H1 (cell line): ENCODE measurements at regions of chr7 and their contacts with region 1.

Region 1: DNA sequence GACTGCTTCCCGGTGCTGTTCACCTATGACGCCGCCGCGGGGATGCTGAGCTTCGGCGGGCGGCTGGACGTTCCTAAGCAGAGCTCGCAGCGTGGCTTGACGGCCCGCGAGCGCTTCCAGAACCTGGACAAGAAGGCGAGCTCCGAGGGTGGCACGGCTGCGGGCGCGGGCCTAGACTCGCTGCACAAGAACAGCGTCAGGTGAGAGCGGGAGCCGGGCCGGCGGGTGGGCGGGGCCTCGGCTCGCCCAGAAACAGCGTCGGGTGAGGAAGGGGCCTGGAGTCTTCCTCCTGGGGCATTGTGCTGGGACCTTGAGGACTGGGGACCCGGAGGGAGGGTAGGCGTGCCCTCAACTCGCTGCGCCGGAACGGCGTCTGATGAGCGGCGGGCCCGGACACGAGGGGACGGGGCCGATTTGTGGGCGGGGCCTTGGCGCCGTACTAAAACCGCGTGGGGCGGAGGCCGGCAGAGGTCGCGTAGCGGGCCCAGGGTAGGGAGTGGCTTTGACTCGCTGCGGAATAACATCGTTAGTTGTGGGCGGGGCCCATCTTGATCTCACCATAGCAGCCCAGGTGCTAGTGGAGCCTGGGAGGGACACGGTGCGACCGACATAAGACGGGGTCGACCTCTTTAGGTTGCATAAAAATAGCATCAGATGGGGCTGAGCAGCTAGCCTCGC is 15.6 kb downstream of the PDAP1 start:
- DNase-seq: peak; percentile 61 to 91
- H3K4me3 ChIP-seq: peak overlapping the region; percentile 31 to 70 (median 62)
- H3K27ac ChIP-seq: peak overlapping the region; percentile 78
- H3K4me1 ChIP-seq: peaks cover 2 to 12% (median 5%) of the 10 kb centered on the region in 4 experiments; a peak in 6 of 7 replicates
- H3K27me3 ChIP-seq: no peaks in the 10 kb centered on the region
- CTCF ChIP-seq: no peak
- EP300 ChIP-seq: no peak
- POLR2A ChIP-seq: peak in 1 of 2 experiments; percentile 84; a peak in 1 of 3 replicates
- RAD21 ChIP-seq: no peak

Region 2: DNA sequence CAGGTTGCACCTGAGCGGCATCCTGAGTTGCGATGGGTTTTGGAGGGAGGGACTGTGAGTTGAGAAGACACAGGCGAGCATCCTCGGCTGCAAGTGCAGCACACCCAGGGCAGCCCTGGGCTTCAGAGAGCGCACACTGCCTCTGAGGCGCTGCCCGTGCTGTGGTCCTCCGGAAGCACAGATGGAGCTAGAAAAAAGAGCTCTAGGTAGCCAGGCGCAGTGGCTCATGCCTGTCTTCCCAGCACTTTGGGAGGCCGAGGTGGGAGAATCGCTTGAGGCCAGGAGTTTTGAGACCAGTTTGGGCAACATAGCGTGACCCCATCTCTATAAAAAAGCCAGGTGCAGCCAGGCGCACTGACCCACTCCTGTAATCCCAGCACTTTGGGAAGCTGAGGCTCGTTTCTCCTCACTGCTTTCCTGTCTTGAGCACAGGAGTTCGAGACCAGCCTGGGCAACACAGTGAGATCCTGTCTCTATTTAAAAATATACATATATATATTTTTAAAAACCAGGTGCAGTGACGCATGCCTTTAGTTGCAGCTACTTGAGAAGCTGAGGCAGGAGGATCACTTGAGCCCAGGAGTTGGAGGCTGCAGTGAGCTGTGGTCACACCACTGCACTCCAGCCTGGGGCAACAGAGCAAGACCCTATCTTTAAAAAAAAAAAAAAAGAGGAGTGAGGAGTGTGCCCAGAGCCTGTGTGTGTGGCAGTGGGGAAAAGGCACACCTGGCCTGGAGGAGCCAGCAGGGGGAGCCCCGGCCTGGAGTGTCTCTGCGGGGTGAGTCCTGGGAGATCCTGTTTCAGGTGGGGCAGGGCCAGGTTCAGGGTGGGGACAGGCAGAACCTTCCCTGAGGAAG is 27.6 kb before region 1 on chr7:
- CTCF ChIA-PET with region 1: interaction called, 40 read pairs
- POLR2A ChIA-PET with region 1: interaction called, 11 read pairs
- DNase-seq: peak in 1 of 2 experiments; percentile 74
- H3K4me3 ChIP-seq: no peak overlapping the region
- H3K27ac ChIP-seq: no peak overlapping the region
- H3K4me1 ChIP-seq: peaks cover 0 to 9% (median 4%) of the 10 kb centered on the region in 4 experiments; a peak in 5 of 7 replicates
- H3K27me3 ChIP-seq: no peaks in the 10 kb centered on the region
- CTCF ChIP-seq: peak; percentile 63 to 72 (median 71)
- EP300 ChIP-seq: no peak
- POLR2A ChIP-seq: no peak
- RAD21 ChIP-seq: peak; percentile 53 to 59

Region 3: DNA sequence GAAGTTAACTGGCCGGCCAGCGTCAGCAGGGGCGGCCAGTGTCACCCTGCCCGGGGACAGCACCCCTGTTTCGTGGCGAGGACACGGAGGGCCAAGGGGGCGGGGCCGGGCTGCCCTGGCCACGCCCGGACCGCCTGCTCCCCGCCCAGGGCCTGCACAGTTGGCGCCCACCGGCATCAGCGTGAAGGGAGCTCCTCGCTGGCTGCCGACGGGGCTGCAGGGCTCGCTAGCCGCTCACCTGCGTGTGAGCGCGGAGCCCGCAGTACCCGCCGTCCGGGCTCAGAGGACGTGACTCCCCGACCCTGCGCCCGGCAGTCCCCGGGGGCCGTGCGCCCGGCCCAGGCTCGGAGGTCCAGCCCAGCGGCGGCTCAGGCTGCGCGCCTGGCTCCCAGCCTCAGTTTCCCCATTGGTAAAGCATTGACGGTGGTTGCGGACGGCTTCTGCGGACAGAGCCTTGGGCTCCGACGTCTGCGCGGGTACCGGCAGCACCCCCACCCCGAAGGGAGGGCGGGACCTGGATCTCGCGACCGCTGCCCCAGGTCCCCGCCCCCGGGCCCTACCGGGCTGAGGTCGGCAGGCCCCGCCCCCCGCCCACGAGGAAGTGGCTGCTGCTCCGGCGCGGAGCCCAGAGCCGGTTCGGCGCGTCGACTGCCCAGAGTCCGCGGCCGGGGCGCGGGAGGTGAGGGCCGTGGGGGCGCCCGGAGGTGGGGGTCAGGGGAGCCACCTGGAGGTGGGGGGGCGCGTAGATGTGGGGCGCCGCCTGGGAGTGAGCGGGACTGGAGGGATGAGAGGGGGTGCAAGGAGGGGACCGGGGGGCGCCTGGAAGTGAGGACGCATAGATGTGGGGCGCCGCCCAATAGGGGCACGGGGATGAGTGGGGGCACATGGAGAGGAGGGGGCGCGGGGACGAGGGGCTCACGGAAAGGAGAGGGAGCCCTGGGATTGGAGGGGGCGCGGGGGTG is 18.4 kb before region 1 on chr7 and contains the start of gene ARPC1B:
- CTCF ChIA-PET with region 1: interaction called, 40 read pairs
- POLR2A ChIA-PET with region 1: interaction called, 49 read pairs
- DNase-seq: peak in 1 of 2 experiments; percentile 80
- H3K4me3 ChIP-seq: peak within 1 kb of the TSS; percentile 65 to 95 (median 70)
- H3K27ac ChIP-seq: no peak within 1 kb of the TSS; the same call in 1 of the 2 replicates
- H3K4me1 ChIP-seq: peaks cover 0 to 2% (median 0%) of the 10 kb centered on the region in 4 experiments; a peak in 2 of 7 replicates
- H3K27me3 ChIP-seq: no peaks in the 10 kb centered on the region
- CTCF ChIP-seq: no peak
- EP300 ChIP-seq: no peak
- POLR2A ChIP-seq: no peak; a peak in 1 of 3 replicates
- RAD21 ChIP-seq: no peak
- total RNA-seq, gene ARPC1B: 61.8 and 64.5 TPM in 2 replicates

Region 4: GRCh38 chr7:99380032-99380822 is 12.6 kb before region 1 on chr7:
- CTCF ChIA-PET with region 1: interaction called, 4 read pairs
- POLR2A ChIA-PET with region 1: interaction called, 49 read pairs
- DNase-seq: no peak
- H3K4me3 ChIP-seq: no peak overlapping the region
- H3K27ac ChIP-seq: no peak overlapping the region
- H3K4me1 ChIP-seq: peaks cover 0 to 5% (median 1%) of the 10 kb centered on the region in 4 experiments; a peak in 3 of 7 replicates
- H3K27me3 ChIP-seq: no peaks in the 10 kb centered on the region
- CTCF ChIP-seq: no peak
- EP300 ChIP-seq: no peak
- POLR2A ChIP-seq: no peak
- RAD21 ChIP-seq: no peak

Region 5: DNA sequence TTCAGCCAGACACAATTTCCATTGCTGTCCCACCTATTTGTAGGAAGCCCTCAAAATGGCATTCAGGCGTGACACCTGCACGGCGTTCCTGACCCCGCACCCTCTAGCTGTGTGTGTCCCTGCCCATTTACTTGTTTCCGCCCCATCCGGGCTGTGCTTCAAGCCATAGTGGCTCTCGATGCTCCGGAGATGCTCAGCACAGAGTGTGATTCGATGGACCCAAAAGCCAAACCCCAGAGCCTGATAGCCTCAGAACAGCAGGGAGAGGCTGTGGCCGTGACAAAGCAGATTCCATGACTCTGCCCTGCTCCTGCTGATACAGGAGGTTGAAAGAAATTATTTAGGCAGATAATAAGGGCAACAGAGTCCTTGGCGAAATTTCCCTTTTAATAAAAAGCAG is 29.4 kb after region 1 on chr7:
- CTCF ChIA-PET with region 1: interaction called, 3 read pairs
- POLR2A ChIA-PET with region 1: interaction called, 32 read pairs
- DNase-seq: no peak
- H3K4me3 ChIP-seq: no peak overlapping the region
- H3K27ac ChIP-seq: no peak overlapping the region
- H3K4me1 ChIP-seq: no peaks in the 10 kb centered on the region; a peak in 1 of 7 replicates
- H3K27me3 ChIP-seq: no peaks in the 10 kb centered on the region; a peak in 1 of 7 replicates
- CTCF ChIP-seq: no peak
- EP300 ChIP-seq: no peak
- POLR2A ChIP-seq: no peak
- RAD21 ChIP-seq: no peak

Region 6: DNA sequence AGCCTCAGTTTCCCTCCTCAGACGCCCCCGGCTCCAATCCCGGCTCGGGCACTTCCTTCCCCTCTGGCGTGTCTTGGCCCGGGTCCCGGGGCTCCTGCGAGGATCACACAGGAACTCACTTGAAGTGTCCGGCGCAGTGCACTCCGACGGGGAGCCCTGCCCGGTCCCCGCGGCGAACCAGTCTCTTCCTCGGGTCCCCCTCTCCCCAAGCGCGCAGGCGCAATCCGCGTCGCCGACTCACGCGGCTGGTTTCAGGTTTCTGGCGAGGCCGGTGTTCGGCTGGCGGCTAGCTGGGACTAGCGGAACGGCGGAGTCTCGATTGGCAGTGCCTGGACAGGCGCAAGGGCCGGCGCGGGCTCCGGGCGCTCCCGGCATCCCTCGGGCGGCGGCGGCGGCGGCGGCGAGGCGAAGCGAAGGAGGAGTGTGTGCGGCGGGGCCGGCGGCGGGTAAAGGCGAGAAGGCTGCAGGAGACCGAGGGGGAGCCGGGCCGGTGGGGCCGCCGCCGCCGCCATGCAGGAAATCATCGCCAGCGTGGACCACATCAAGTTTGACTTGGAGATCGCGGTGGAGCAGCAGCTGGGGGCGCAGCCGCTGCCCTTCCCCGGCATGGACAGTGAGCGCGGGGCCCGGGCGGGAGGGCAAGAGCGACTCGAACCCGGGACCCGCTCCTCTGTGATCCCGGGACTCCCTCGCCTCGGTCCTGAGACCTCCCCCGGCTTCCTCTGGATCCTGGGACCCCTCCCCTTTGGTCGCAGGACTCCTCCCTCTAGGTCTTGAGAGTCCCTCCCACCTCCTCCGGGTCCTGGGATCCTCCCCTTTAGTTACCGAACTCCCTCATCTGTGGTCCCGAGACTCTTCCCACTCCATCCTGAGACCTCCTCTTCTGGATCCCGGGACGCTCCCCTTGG is 46.0 kb after region 1 on chr7 and contains the starts of genes CPSF4 and PTCD1:
- CTCF ChIA-PET with region 1: no interaction called
- POLR2A ChIA-PET with region 1: interaction called, 12 read pairs
- DNase-seq: peak; percentile 84 to 96
- H3K4me3 ChIP-seq: peak within 1 kb of the TSS; percentile 87 to 95 (median 88)
- H3K27ac ChIP-seq: peak within 1 kb of the TSS; percentile 93
- H3K4me1 ChIP-seq: peaks cover 0 to 12% (median 6%) of the 10 kb centered on the region in 4 experiments; a peak in 5 of 7 replicates
- H3K27me3 ChIP-seq: no peaks in the 10 kb centered on the region
- CTCF ChIP-seq: no peak
- EP300 ChIP-seq: peak in 1 of 2 experiments; percentile 49; a peak in 1 of 3 replicates
- POLR2A ChIP-seq: peak in 1 of 2 experiments; percentile 83; a peak in 2 of 3 replicates
- RAD21 ChIP-seq: no peak
- total RNA-seq, gene CPSF4: 74.8 and 77.5 TPM in 2 replicates
- total RNA-seq, gene PTCD1: 7.5 and 8.5 TPM in 2 replicates

Region 7: DNA sequence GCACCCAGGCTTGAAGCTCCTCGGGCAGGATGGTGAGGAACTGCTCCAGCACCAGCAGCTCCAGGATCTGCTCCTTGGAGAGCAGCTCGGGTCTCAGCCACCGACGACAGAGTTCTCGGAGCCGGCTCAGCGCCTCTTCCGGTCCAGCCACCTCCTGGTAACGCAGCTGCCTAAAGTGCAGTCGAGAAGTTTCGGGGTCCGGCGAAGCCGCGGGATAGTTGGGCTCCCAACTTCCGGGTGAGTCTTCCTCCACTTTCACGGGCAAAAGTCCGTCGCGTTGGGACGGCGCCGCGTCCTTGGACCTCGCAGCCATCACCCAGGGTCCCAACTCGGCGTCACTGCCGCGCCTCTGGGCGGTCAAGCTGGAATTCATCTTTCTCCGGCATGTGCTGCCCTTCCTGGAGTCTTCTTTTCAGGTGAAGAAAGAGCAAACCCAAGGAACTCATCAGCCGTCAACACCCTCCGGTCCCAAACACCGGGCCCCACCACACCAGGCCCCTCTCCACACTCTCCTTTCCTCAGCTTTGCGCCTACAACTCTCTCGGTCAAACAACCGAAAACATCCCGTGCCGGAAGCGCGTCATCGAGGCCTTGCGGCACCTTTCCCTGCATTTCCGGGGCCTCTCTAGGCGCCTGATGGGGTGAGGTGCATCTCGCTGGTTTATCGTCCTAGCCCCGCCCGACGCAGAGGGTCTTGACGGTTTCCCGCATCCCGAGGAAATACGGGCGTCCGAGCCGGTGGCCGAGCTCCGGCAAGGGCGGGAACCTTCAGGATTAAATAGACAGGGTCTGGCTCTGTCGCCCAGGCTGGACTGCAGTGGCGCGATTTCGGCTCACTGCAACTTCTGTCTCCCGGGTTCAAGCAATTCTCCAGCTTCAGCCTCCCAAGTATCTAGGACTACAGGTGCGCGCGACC is 107.2 kb after region 1 on chr7 and contains the start of gene ZNF394:
- CTCF ChIA-PET with region 1: no interaction called
- POLR2A ChIA-PET with region 1: no interaction called
- DNase-seq: peak; percentile 77 to 92
- H3K4me3 ChIP-seq: peak within 1 kb of the TSS; percentile 86 to 100 (median 93)
- H3K27ac ChIP-seq: peak within 1 kb of the TSS; percentile 88
- H3K4me1 ChIP-seq: peaks cover 0 to 4% (median 0%) of the 10 kb centered on the region in 4 experiments; a peak in 3 of 7 replicates
- H3K27me3 ChIP-seq: no peaks in the 10 kb centered on the region
- CTCF ChIP-seq: peak in 1 of 3 experiments; percentile 4; a peak in 1 of 4 replicates
- EP300 ChIP-seq: peak in 1 of 2 experiments; percentile 65; a peak in 1 of 3 replicates
- POLR2A ChIP-seq: peak; percentile 85 to 94
- RAD21 ChIP-seq: no peak
- total RNA-seq, gene ZNF394: 19.3 and 24.0 TPM in 2 replicates